ENCODE measurements at regions of chr10 and their contacts with region 1.

Region 1: GRCh38 chr10:60848126-60848525 is 69.8 kb downstream of the CDK1 start:
- DNase-seq: peak in 4 of 5 donors; percentile 51 to 61 (median 54)
- ATAC-seq: peak; percentile 35 to 86 (median 73)
- H3K4me3 ChIP-seq: no peak overlapping the region
- H3K27ac ChIP-seq: peak overlapping the region in 9 of 12 donors; percentile 36 to 80 (median 59)
- H3K4me1 ChIP-seq: peaks cover 0 to 38% (median 17%) of the 10 kb centered on the region in 12 donors
- H3K27me3 ChIP-seq: no peaks in the 10 kb centered on the region
- CTCF ChIP-seq: peak in 4 of 12 donors; percentile 7 to 41 (median 24)
- POLR2A ChIP-seq: no peak

Region 2: GRCh38 chr10:60896033-60896432 is 47.9 kb after region 1 on chr10:
- intact Hi-C with region 1: loop called in 2 of 10 experiments (anchors 5 to 10 kb)
- DNase-seq: no peak
- ATAC-seq: peak; percentile 12 to 46 (median 40)
- H3K4me3 ChIP-seq: no peak overlapping the region
- H3K27ac ChIP-seq: peak overlapping the region; percentile 37 to 84 (median 65)
- H3K4me1 ChIP-seq: peaks cover 0 to 48% (median 31%) of the 10 kb centered on the region in 12 donors
- H3K27me3 ChIP-seq: no peaks in the 10 kb centered on the region
- CTCF ChIP-seq: no peak
- POLR2A ChIP-seq: no peak

Region 3: GRCh38 chr10:60901561-60902235 is 53.6 kb after region 1 on chr10:
- intact Hi-C with region 1: loop called in 2 of 10 experiments (anchors 5 to 10 kb)
- DNase-seq: peak; percentile 81 to 91 (median 86)
- ATAC-seq: peak; percentile 93 to 95 (median 94)
- H3K4me3 ChIP-seq: no peak overlapping the region
- H3K27ac ChIP-seq: peak overlapping the region; percentile 32 to 86 (median 64)
- H3K4me1 ChIP-seq: peaks cover 0 to 68% (median 26%) of the 10 kb centered on the region in 12 donors
- H3K27me3 ChIP-seq: no peaks in the 10 kb centered on the region
- CTCF ChIP-seq: no peak
- POLR2A ChIP-seq: no peak